Gastrocnemius medialis (tissue), 4 donors: ENCODE measurements at regions of chr10 and their contacts with region 1.

Region 1: GRCh38 chr10:49300140-49300974 is 1.4 kb downstream of the C10orf71 start:
- DNase-seq: peak; percentile 88 to 89
- ATAC-seq: peak; percentile 43 to 51
- H3K4me3 ChIP-seq: peak overlapping the region; percentile 55 to 72 (median 66)
- H3K27ac ChIP-seq: peak overlapping the region; percentile 95 to 100 (median 96)
- H3K4me1 ChIP-seq: peaks cover 85% of the 10 kb centered on the region in 2 donors
- H3K27me3 ChIP-seq: no peaks in the 10 kb centered on the region
- CTCF ChIP-seq: peak in 1 of 5 experiments; percentile 20
- POLR2A ChIP-seq: peak; percentile 56 to 71

Region 2: GRCh38 chr10:49053053-49053997 is 247.0 kb before region 1 on chr10:
- in situ Hi-C with region 1: no loop called
- intact Hi-C with region 1: no loop called
- DNase-seq: peak in 1 of 2 donors; percentile 34
- ATAC-seq: peak; percentile 39 to 49
- H3K4me3 ChIP-seq: no peak overlapping the region
- H3K27ac ChIP-seq: no peak overlapping the region
- H3K4me1 ChIP-seq: peaks cover 0 to 10% of the 10 kb centered on the region in 2 donors
- H3K27me3 ChIP-seq: no peaks in the 10 kb centered on the region
- CTCF ChIP-seq: no peak
- POLR2A ChIP-seq: no peak

Region 3: DNA sequence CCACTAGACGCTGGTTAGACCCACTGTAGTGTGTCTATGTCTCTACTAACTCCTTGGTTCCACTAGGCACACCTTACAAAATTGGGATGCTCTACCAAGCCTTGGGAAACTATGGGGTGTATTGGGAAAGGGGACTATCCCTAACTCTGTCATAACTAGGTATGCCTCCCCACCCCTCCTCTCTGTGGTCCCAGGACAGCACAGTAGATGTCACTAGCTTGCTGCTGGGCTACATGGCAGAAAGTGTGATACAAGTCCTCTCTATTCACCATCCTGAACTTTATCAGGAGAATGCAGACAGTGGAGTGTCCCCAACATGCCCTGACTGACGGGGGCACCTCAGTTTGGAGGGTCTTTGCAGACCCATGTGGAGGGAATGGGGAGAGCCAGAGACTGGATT is 81.9 kb before region 1 on chr10:
- in situ Hi-C with region 1: no loop called
- intact Hi-C with region 1: loop called (anchors 5 kb)
- DNase-seq: no peak
- ATAC-seq: peak; percentile 44 to 58
- H3K4me3 ChIP-seq: no peak overlapping the region
- H3K27ac ChIP-seq: no peak overlapping the region
- H3K4me1 ChIP-seq: no peaks in the 10 kb centered on the region
- H3K27me3 ChIP-seq: no peaks in the 10 kb centered on the region
- CTCF ChIP-seq: peak in 1 of 5 experiments; percentile 11
- POLR2A ChIP-seq: no peak

Region 4: GRCh38 chr10:49272251-49273081 is 27.9 kb before region 1 on chr10:
- in situ Hi-C with region 1: no loop called
- intact Hi-C with region 1: loop called (anchors 1 kb)
- DNase-seq: peak; percentile 86 to 95
- ATAC-seq: peak; percentile 89 to 90
- H3K4me3 ChIP-seq: no peak overlapping the region
- H3K27ac ChIP-seq: peak overlapping the region; percentile 92 to 97 (median 94)
- H3K4me1 ChIP-seq: peaks cover 33 to 47% of the 10 kb centered on the region in 2 donors
- H3K27me3 ChIP-seq: no peaks in the 10 kb centered on the region
- CTCF ChIP-seq: peak in 1 of 5 experiments; percentile 18
- POLR2A ChIP-seq: peak; percentile 60 to 73

Region 5: GRCh38 chr10:49277973-49278372 is 22.4 kb before region 1 on chr10:
- in situ Hi-C with region 1: no loop called
- intact Hi-C with region 1: loop called (anchors 1 kb)
- DNase-seq: no peak
- ATAC-seq: no peak
- H3K4me3 ChIP-seq: no peak overlapping the region
- H3K27ac ChIP-seq: peak overlapping the region; percentile 80 to 92 (median 86)
- H3K4me1 ChIP-seq: peaks cover 36 to 64% of the 10 kb centered on the region in 2 donors
- H3K27me3 ChIP-seq: no peaks in the 10 kb centered on the region
- CTCF ChIP-seq: no peak
- POLR2A ChIP-seq: no peak